ENCODE measurements at regions of chr2 and their contacts with region 1.

Region 1: GRCh38 chr2:68909793-68910674 is 38.8 kb upstream of the BMP10 start:
- DNase-seq: peak; percentile 54 to 79 (median 77)
- H3K4me3 ChIP-seq: no peak overlapping the region
- H3K27ac ChIP-seq: no peak overlapping the region
- H3K4me1 ChIP-seq: peaks cover 3% of the 10 kb centered on the region
- H3K27me3 ChIP-seq: no peaks in the 10 kb centered on the region
- CTCF ChIP-seq: peak; percentile 37 to 89 (median 82)
- EP300 ChIP-seq: no peak
- POLR2A ChIP-seq: no peak

Region 2: GRCh38 chr2:68487773-68488355 is 422.2 kb before region 1 on chr2:
- intact Hi-C with region 1: loop called in 1 of 4 experiments (anchors 10 kb)
- DNase-seq: no peak
- H3K4me3 ChIP-seq: no peak overlapping the region
- H3K27ac ChIP-seq: no peak overlapping the region
- H3K4me1 ChIP-seq: no peaks in the 10 kb centered on the region
- H3K27me3 ChIP-seq: no peaks in the 10 kb centered on the region
- CTCF ChIP-seq: no peak
- EP300 ChIP-seq: no peak
- POLR2A ChIP-seq: no peak

Region 3: DNA sequence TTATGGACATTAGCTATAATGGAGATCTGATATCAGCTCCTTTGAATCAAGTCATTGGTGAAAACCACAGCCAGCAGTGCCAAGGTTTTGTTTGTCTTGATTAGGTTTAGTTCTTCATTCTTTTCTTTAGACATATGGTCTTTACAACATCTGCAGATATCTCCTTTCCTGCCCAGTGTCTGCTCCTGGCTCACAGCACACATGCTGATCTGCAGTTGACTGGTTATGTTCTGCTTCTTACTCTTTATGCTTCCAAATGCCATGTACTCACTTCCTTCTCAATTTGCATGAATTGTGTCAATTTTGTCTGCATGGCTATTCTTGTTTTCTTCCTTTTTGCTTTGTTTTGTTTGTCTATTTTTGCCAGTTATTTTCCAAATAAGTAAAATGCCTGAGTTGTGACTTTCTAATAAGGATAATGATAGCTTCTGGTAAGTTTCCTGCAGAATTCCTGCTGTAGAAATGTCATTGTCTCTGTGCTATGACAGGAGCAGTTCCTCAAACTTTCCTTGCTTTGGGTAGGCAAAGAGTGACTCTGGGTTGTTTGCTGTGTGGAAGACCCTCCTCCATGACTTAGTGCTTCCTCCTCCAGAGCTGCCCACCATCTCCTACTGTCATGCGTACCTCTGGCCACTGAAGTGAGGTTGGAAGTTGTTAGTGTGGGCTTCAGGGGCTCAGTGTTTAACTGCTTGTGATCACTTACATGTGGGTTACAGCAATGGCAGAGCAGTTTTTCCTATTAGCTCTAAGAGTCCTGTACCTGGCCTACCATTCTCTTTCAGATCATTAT is 167.2 kb before region 1 on chr2:
- intact Hi-C with region 1: loop called in 3 of 4 experiments (anchors 5 to 10 kb)
- DNase-seq: no peak
- H3K4me3 ChIP-seq: no peak overlapping the region
- H3K27ac ChIP-seq: no peak overlapping the region
- H3K4me1 ChIP-seq: no peaks in the 10 kb centered on the region
- H3K27me3 ChIP-seq: no peaks in the 10 kb centered on the region
- CTCF ChIP-seq: no peak
- EP300 ChIP-seq: no peak
- POLR2A ChIP-seq: no peak

Region 4: GRCh38 chr2:68751397-68752339 is 158.4 kb before region 1 on chr2:
- intact Hi-C with region 1: loop called (anchors 5 to 10 kb)
- DNase-seq: peak; percentile 84 to 93 (median 91)
- H3K4me3 ChIP-seq: no peak overlapping the region
- H3K27ac ChIP-seq: no peak overlapping the region
- H3K4me1 ChIP-seq: peaks cover 6% of the 10 kb centered on the region
- H3K27me3 ChIP-seq: no peaks in the 10 kb centered on the region
- CTCF ChIP-seq: peak; percentile 85 to 91 (median 87)
- EP300 ChIP-seq: no peak
- POLR2A ChIP-seq: no peak

Region 5: DNA sequence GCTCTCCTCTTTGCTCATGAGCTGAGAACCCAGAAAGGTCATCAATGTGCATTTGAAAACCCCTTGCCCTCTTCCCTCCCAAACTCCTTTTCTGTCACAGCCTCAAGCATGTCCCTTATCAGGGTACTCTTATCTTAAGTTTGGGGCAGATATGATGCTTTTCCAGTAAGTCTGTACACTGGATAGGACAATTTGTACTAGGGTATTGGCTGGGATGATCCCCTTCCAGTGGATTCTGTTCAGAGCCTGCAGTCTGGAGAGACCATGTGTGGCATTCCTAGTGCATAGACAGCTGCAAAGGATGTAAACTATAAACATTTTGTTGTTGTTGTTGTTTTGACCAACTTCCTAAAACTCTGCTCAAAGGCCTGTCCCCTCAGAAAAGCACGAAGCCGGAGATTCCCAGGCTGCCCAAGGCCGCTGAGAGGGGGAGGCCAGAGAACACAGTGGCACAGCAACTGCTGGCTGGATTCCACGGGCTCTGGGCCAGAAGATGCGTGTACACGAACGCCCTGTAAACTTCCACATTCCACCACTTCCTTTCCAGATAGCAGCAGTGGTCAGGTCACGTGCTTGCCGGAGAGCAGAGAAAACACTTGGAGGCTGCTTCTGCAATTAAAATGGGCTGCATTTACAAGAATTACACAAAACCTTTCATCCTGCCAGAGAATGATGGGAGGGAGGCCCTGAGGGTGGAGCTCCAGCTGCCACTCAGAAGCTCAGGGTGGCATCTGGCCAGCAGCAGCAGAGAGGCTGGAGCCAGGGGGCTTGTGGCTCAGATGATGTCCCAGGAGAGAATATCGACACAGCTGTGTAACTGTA is 80.9 kb before region 1 on chr2:
- intact Hi-C with region 1: loop called in 1 of 4 experiments (anchors 10 kb)
- DNase-seq: peak; percentile 96 to 99 (median 98)
- H3K4me3 ChIP-seq: no peak overlapping the region
- H3K27ac ChIP-seq: peak overlapping the region in 1 of 2 donors; percentile 16
- H3K4me1 ChIP-seq: peaks cover 14% of the 10 kb centered on the region
- H3K27me3 ChIP-seq: no peaks in the 10 kb centered on the region
- CTCF ChIP-seq: peak in 1 of 3 donors; percentile 18
- EP300 ChIP-seq: peak; percentile 39
- POLR2A ChIP-seq: no peak

Region 6: DNA sequence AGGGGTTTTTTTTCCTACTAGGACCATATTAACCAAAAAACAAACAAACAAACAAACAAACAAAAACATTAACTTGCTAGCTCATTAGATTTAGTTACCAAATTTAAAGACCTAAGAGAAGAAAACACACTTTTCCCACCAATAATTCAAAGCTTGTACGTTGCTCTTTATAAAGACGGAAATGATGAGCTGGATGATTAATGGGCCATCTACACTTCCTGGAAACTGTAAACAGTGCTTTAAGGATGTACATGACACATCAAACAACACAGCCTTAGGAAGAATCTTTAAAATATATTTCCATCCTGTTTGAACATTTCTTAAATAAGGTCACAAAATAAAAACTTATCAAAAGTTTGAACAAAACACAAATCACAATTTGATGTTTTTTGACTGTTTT is 39.8 kb before region 1 on chr2:
- intact Hi-C with region 1: no loop called
- DNase-seq: no peak
- H3K4me3 ChIP-seq: no peak overlapping the region
- H3K27ac ChIP-seq: no peak overlapping the region
- H3K4me1 ChIP-seq: no peaks in the 10 kb centered on the region
- H3K27me3 ChIP-seq: no peaks in the 10 kb centered on the region
- CTCF ChIP-seq: no peak
- EP300 ChIP-seq: no peak
- POLR2A ChIP-seq: no peak